ENCODE measurements at regions of chr17 and their contacts with region 1.

Region 1: GRCh38 chr17:7851438-7852256 is 3.2 kb upstream of the TMEM88 start:
- DNase-seq: peak; percentile 92 to 96 (median 94)
- ATAC-seq: peak; percentile 91
- H3K4me3 ChIP-seq: peak overlapping the region; percentile 51
- H3K4me3 Mint-ChIP-seq: peak overlapping the region; percentile 45 to 85 (median 70)
- H3K27ac ChIP-seq: peak overlapping the region; percentile 70
- H3K27ac Mint-ChIP-seq: peak overlapping the region; percentile 55 to 93 (median 82)
- H3K4me1 ChIP-seq: peaks cover 20 to 31% of the 10 kb centered on the region in 2 donors
- H3K4me1 Mint-ChIP-seq: peaks cover 0 to 26% (median 17%) of the 10 kb centered on the region in 7 donors
- H3K27me3 ChIP-seq: no peaks in the 10 kb centered on the region
- H3K27me3 Mint-ChIP-seq: no peaks in the 10 kb centered on the region

Region 2: DNA sequence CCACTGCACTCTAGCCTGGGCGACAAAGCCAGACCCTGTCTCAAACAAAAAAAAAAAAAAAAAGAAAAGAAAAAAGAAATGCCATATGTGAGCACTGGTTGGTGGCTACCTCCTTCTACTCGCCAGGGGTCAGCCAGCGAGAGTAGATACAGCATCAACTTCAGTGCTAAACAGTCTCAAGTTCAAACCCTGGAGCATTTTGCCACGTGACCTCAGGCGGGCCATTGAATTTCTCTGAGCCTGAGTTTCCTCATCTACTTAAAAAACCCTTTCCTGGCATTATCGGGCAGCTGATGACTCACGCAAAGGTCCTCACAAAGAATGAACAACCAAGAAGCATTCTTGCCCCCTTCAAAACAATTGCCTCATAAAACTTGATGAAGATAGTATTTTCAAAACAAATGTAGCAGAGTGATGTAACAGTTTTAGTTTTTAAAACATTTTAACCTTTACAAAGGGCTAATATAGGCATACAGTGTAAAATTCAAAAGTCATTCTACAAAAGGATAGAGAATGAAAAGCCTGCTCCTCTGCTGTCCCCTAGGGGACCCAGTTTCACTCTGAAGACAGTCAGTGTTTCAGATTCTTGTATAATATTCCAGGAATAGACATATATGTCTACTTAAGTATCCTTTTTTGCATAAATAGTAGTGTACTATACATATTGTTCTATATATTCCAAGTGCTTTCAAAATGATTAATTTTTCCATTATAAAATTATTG is 105.7 kb before region 1 on chr17:
- CTCF ChIA-PET with region 1: interaction called, 3 read pairs
- POLR2A ChIA-PET with region 1: no interaction called
- intact Hi-C with region 1: loop called (anchors 1 kb)
- DNase-seq: no peak
- ATAC-seq: no peak
- H3K4me3 ChIP-seq: no peak overlapping the region
- H3K4me3 Mint-ChIP-seq: no peak overlapping the region
- H3K27ac ChIP-seq: no peak overlapping the region
- H3K27ac Mint-ChIP-seq: no peak overlapping the region
- H3K4me1 ChIP-seq: no peaks in the 10 kb centered on the region
- H3K4me1 Mint-ChIP-seq: peaks cover 0 to 2% (median 0%) of the 10 kb centered on the region in 7 donors
- H3K27me3 ChIP-seq: no peaks in the 10 kb centered on the region
- H3K27me3 Mint-ChIP-seq: peaks cover 2 to 18% (median 10%) of the 10 kb centered on the region in 5 donors

Region 3: DNA sequence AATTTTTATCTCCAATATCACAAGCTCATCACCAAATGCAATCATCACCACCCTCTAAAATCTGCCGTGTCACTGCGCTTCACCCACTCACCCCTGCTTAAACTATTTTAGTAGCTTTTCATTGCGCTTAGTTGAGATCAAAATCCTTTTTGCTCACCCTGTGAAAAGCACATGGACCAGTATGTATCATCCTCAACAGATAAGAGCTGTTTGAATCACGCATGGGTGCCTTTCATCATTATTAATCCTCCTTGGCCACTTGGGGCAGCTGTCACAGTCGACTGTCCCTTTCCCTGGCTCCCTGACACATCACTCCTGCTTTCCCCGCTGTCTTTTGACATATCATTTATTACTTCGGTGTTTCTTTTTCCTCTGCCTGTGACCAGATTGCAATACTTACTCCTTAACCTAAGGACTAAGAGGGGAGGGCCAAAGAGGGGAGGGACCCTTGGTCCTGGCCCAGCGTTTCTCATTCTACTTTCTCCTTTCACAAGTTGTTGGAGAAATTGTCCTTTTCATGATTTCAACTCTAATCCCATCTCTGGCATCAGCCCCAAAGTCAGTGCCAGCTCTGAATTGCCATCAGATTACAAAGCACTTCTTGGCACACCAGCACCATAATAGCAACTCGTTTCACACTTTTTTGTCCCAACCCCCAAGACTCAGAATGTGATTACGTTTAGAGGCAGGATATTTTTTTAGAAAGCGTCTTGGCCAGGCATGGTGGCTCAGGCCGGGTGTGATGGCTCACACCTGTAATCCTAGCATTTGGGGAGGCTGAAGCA is 26.2 kb before region 1 on chr17:
- CTCF ChIA-PET with region 1: interaction called, 7 read pairs
- POLR2A ChIA-PET with region 1: interaction called, 89 read pairs
- intact Hi-C with region 1: loop called (anchors 1 kb)
- DNase-seq: no peak
- ATAC-seq: peak; percentile 47
- H3K4me3 ChIP-seq: no peak overlapping the region
- H3K4me3 Mint-ChIP-seq: no peak overlapping the region
- H3K27ac ChIP-seq: no peak overlapping the region
- H3K27ac Mint-ChIP-seq: peak overlapping the region in 1 of 9 donors; percentile 23
- H3K4me1 ChIP-seq: no peaks in the 10 kb centered on the region
- H3K4me1 Mint-ChIP-seq: peaks cover 0 to 5% (median 0%) of the 10 kb centered on the region in 7 donors
- H3K27me3 ChIP-seq: no peaks in the 10 kb centered on the region
- H3K27me3 Mint-ChIP-seq: peaks cover 0 to 32% (median 0%) of the 10 kb centered on the region in 5 donors

Region 4: DNA sequence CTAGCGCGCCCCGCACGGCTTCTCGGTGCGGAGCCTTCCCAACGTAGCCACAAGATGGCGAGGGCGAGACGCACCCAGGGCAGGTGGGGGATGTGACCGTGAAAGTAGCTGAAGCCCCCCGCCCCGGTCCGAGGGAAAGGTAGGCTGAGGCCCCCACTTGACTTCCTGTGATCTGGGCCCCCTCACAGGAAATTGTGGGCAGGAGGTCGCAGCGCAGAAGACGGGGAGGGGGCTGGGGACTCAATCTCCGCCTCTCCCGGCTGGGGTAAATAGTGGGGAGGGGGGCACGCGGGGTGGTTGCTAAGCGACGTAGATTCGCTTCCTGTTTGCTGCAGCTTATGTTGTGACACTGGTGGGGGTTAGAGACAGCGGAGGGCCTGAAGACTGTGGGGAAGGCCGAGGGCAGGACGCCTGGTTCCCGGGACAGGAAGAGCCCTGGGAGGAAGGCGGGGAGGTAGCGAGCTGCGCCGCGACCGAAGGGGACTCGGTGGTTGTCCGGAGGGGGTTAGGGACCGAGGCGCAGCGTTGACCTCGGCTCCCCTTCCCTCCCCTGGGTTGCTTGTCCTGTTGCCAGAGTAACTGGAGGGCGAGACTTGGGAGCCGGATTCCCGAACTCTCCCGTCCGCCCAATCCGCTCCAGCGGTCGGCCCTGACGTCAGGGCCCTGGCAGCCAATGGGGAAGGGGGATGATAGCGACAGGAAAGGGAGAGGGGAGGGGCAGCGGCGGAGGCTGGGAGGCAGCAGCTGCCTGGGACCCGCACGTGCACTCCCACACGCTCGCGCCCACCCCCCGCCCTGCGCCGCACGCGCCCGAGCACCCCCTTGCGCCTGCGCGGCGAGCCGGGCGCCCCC is 16.5 kb before region 1 on chr17:
- CTCF ChIA-PET with region 1: interaction called, 43 read pairs
- POLR2A ChIA-PET with region 1: interaction called, 89 read pairs
- intact Hi-C with region 1: loop called (anchors 1 kb)
- DNase-seq: peak; percentile 76 to 97 (median 95)
- ATAC-seq: peak; percentile 70
- H3K4me3 ChIP-seq: peak overlapping the region; percentile 96
- H3K4me3 Mint-ChIP-seq: peak overlapping the region; percentile 91 to 99 (median 96)
- H3K27ac ChIP-seq: peak overlapping the region; percentile 96
- H3K27ac Mint-ChIP-seq: peak overlapping the region; percentile 95 to 100 (median 99)
- H3K4me1 ChIP-seq: peaks cover 29 to 38% of the 10 kb centered on the region in 2 donors
- H3K4me1 Mint-ChIP-seq: peaks cover 28 to 60% (median 44%) of the 10 kb centered on the region in 7 donors
- H3K27me3 ChIP-seq: no peaks in the 10 kb centered on the region
- H3K27me3 Mint-ChIP-seq: peaks cover 0 to 28% (median 0%) of the 10 kb centered on the region in 5 donors

Region 5: DNA sequence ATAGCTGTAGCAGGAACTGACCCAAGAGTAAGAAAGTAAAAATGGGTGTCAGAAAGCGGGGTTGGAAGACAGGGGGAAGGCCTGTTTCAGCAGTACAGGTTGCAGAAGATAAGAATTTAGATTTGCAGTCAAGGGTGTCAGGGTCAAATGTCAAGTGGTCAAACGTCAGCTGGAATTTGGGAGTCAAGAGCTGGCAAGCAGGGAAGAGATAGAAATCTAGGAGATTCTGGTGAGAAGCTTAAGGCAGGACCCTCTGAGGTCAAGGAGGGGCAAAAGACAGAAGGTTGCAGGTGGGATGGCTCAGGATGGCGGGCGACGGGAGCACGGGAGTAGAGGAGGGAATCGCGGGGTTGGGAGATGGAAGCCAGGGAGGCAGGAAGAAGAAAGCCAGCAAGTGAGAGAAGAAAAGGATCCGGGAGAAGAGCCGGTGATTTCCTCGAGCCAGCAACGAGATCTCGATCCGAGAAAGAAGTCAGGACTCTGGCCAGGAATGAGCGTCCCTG is 443.2 kb after region 1 on chr17:
- CTCF ChIA-PET with region 1: no interaction called
- POLR2A ChIA-PET with region 1: no interaction called
- intact Hi-C with region 1: loop called in 1 of 2 experiments (anchors 1 kb)
- DNase-seq: no peak
- ATAC-seq: no peak
- H3K4me3 ChIP-seq: peak overlapping the region; percentile 96
- H3K4me3 Mint-ChIP-seq: peak overlapping the region; percentile 87 to 97 (median 90)
- H3K27ac ChIP-seq: peak overlapping the region; percentile 86
- H3K27ac Mint-ChIP-seq: peak overlapping the region; percentile 81 to 98 (median 93)
- H3K4me1 ChIP-seq: peaks cover 4 to 13% of the 10 kb centered on the region in 2 donors
- H3K4me1 Mint-ChIP-seq: peaks cover 23 to 45% (median 38%) of the 10 kb centered on the region in 7 donors
- H3K27me3 ChIP-seq: no peaks in the 10 kb centered on the region
- H3K27me3 Mint-ChIP-seq: no peaks in the 10 kb centered on the region